ENCODE measurements at regions of chr9 and their contacts with region 1.

Region 1: GRCh38 chr9:83622939-83623678 is at the start of gene IDNK:
- DNase-seq: peak; percentile 54
- ATAC-seq: peak; percentile 72
- H3K4me3 ChIP-seq: peak within 1 kb of the TSS; percentile 85
- H3K27ac ChIP-seq: peak within 1 kb of the TSS; percentile 34
- H3K4me1 ChIP-seq: peaks cover 9% of the 10 kb centered on the region; the same call in 1 of the 2 replicates
- H3K27me3 ChIP-seq: no peaks in the 10 kb centered on the region
- CTCF ChIP-seq: no peak
- total RNA-seq, gene IDNK: 1.4 and 2.8 TPM in 2 replicates

Region 2: DNA sequence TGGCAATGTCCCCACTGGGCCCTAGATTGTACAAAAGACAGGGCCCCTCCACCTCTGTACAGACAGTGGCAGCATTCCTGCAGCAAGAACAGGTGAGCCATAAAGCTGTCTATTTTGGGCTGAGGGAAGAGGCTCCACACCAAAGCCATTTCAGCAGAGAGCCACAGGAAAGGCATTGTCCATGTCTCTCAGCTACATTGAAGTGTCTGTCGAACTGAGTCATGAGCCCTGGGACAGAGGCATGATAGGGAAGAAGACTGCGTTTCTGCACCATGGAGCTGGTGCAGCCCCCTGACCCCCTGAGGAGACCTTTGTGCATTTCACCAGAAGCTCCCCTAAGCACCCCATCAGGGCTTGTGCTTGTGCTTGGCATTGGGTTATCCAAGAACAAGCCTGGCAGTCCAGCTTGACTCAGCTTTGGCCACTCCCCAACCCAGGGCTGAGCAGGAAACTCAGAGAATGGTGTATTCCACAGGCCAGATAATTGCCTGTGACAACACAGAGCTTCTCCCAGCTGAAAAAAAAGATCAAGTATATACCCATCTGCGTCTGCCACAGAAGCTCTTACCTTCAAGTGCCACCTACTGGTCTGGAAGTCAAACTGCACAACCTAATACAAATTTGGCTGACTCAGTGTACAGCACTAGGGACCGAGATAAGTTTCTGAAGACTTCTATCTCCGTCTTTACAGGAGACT is 79.0 kb before region 1 on chr9:
- CTCF ChIA-PET with region 1: no interaction called
- POLR2A ChIA-PET with region 1: no interaction called
- intact Hi-C with region 1: no loop called
- DNase-seq: peak; percentile 75
- ATAC-seq: peak; percentile 97
- H3K4me3 ChIP-seq: no peak overlapping the region
- H3K27ac ChIP-seq: no peak overlapping the region
- H3K4me1 ChIP-seq: no peaks in the 10 kb centered on the region
- H3K27me3 ChIP-seq: no peaks in the 10 kb centered on the region
- CTCF ChIP-seq: peak; percentile 74

Region 3: GRCh38 chr9:83649080-83649479 is 26.0 kb after region 1 on chr9:
- CTCF ChIA-PET with region 1: no interaction called
- POLR2A ChIA-PET with region 1: no interaction called
- intact Hi-C with region 1: loop called (anchors 2 kb)
- DNase-seq: peak; percentile 41
- ATAC-seq: peak; percentile 53
- H3K4me3 ChIP-seq: no peak overlapping the region
- H3K27ac ChIP-seq: no peak overlapping the region
- H3K4me1 ChIP-seq: no peaks in the 10 kb centered on the region
- H3K27me3 ChIP-seq: no peaks in the 10 kb centered on the region
- CTCF ChIP-seq: peak; percentile 64

Measured in PC-3 (cell line).